PC-3 (cell line): ENCODE measurements at regions of chr5 and their contacts with region 1.

Region 1: DNA sequence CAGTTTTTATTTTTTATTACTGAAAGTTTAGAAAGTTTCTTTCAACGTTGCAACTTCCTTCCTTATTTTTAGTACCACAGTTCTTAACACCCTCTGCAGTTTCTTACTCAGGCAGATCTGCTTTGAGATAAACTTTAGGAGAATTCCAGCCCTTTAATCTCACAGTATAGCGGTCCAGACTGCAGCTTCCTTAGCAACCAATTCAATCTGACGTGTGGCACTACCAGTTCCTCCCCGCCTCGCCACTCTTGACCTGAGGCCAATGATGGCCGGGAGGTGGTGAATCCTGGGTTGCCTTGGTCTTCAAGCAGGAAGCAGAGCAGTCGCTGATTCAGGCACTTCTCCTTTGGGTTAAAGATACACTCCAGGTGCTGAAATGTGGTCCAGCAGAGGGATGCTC is 334.3 kb upstream of the TRPC7 start:
- DNase-seq: no peak
- ATAC-seq: no peak
- H3K4me3 ChIP-seq: no peak overlapping the region
- H3K27ac ChIP-seq: no peak overlapping the region
- H3K4me1 ChIP-seq: peaks cover 15% of the 10 kb centered on the region
- H3K27me3 ChIP-seq: no peaks in the 10 kb centered on the region
- CTCF ChIP-seq: no peak

Region 2: GRCh38 chr5:136374003-136374402 is 325.6 kb before region 1 on chr5:
- CTCF ChIA-PET with region 1: no interaction called
- POLR2A ChIA-PET with region 1: no interaction called
- intact Hi-C with region 1: loop called (anchors 10 kb)
- DNase-seq: peak; percentile 64
- ATAC-seq: peak; percentile 73
- H3K4me3 ChIP-seq: no peak overlapping the region
- H3K27ac ChIP-seq: no peak overlapping the region
- H3K4me1 ChIP-seq: peaks cover 7% of the 10 kb centered on the region; the same call in 1 of the 2 replicates
- H3K27me3 ChIP-seq: no peaks in the 10 kb centered on the region
- CTCF ChIP-seq: peak; percentile 66

Region 3: GRCh38 chr5:136729901-136730385 is 30.3 kb after region 1 on chr5:
- CTCF ChIA-PET with region 1: no interaction called
- POLR2A ChIA-PET with region 1: no interaction called
- intact Hi-C with region 1: loop called (anchors 5 kb)
- DNase-seq: peak; percentile 94
- ATAC-seq: peak; percentile 75
- H3K4me3 ChIP-seq: peak overlapping the region; percentile 51; the same call in 1 of the 2 replicates
- H3K27ac ChIP-seq: peak overlapping the region; percentile 100
- H3K4me1 ChIP-seq: peaks cover 39% of the 10 kb centered on the region
- H3K27me3 ChIP-seq: no peaks in the 10 kb centered on the region
- CTCF ChIP-seq: no peak

Region 4: GRCh38 chr5:136802383-136802782 is 102.7 kb after region 1 on chr5:
- CTCF ChIA-PET with region 1: no interaction called
- POLR2A ChIA-PET with region 1: no interaction called
- intact Hi-C with region 1: no loop called
- DNase-seq: peak; percentile 56
- ATAC-seq: no peak
- H3K4me3 ChIP-seq: no peak overlapping the region
- H3K27ac ChIP-seq: no peak overlapping the region
- H3K4me1 ChIP-seq: peaks cover 8% of the 10 kb centered on the region; the same call in 1 of the 2 replicates
- H3K27me3 ChIP-seq: no peaks in the 10 kb centered on the region
- CTCF ChIP-seq: peak; percentile 66